A673 (cell line): ENCODE measurements at regions of chr5 and their contacts with region 1.

Region 1: DNA sequence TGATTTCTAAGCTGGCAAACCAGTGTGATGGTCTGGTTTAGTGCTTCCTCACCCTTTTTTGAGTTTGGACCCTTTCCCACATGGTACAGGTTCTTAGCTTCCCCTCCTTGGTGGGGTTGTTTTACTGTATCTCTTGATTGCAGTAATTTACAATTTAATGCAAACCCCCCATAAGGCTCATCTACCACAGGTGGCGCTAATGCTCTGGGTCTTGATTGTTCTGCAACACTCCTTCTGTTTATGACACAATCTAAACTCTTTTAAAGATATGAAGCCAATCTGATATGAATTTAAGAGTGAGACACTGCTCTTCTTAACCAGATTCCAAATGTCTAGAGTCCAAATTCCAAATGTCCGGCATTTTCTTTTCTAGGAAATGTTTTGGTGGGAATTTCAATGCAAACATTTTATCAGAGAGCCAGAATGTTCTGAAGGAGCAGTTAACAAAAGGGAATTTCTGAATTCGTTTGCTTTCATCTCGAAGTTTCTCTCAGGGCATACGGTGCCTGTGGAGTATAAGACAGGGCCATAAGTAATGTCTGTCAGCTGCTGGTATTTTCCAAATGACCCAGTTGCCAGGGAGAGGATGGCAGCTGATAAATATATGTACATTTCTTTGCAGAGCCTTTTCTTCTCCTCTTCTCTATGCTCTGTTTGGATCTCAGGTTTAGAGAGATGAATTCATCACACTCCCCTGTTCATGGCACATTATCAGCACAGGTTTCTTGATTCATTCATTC is 246.8 kb downstream of the ARHGAP26 start:
- DNase-seq: peak; percentile 68
- H3K4me3 ChIP-seq: no peak overlapping the region
- H3K27ac ChIP-seq: no peak overlapping the region
- H3K4me1 ChIP-seq: no peaks in the 10 kb centered on the region
- H3K27me3 ChIP-seq: no peaks in the 10 kb centered on the region
- CTCF ChIP-seq: peak; percentile 82

Region 2: DNA sequence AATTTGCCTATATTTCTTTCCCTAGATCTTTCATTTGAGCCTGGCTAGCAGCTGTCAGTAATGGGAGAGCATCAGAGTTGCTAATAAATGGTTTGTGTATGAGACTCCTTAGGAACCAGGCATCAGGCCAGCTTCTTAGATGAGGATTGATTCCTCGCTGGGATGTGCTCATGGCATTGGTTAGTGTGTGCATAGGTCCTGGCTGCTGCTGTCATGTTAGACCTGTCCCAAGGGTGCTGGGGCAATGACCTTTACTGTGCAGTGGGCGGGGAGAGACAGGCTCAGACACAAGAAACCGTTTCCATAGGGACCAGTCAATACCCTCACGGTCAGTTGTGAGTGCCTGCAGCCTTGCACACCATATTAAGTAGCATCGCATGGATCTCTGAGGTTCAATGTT is 498.9 kb after region 1 on chr5:
- CTCF ChIA-PET with region 1: no interaction called
- POLR2A ChIA-PET with region 1: no interaction called
- intact Hi-C with region 1: no loop called
- DNase-seq: no peak
- H3K4me3 ChIP-seq: no peak overlapping the region
- H3K27ac ChIP-seq: no peak overlapping the region
- H3K4me1 ChIP-seq: no peaks in the 10 kb centered on the region
- H3K27me3 ChIP-seq: no peaks in the 10 kb centered on the region
- CTCF ChIP-seq: no peak

Region 3: DNA sequence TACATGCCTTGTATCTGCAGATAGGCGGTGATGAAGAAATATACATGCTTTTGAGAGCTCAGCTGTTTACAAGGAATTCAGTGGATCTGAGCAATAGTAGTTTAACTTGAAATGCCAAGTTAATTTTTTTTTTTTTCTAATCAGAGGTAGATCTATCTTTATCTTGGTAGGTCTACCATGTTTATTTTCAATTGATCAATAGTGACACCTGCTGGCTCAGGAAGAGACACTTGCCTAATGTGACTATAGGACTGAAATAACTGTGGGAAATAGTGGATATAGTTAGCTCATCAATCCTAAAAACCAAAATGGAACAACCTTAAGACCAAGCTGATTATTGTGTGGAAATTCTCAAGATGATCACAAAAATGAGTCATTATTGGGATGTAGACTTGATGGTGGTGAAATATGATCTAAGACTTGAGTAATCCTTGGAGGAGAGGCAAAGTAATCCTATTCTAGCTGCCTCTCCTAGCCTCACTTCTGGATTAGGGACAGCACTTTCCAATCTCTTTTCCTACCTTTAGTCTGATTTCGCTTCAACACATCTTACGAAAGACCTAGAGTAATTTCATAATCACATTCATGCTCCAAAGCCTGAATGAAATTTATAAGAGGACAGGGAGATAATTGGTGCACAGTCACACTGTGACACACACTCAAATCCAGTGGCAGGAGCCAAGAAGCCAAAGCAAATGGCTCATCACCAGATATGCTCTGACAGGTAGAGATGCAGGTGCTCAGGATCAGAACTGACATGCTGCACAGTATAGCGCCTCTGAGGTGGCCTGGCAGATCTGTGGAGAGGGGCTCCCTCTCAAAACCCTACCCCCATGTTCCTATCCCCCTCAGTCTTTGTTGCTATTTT is 951.3 kb after region 1 on chr5:
- CTCF ChIA-PET with region 1: no interaction called
- POLR2A ChIA-PET with region 1: no interaction called
- intact Hi-C with region 1: loop called (anchors 10 kb)
- DNase-seq: peak; percentile 62
- H3K4me3 ChIP-seq: no peak overlapping the region
- H3K27ac ChIP-seq: no peak overlapping the region
- H3K4me1 ChIP-seq: no peaks in the 10 kb centered on the region
- H3K27me3 ChIP-seq: peaks cover 36% of the 10 kb centered on the region
- CTCF ChIP-seq: peak; percentile 69